HEK293T (cell line): ENCODE measurements at regions of chr3 and their contacts with region 1.

Region 1: GRCh38 chr3:111717601-111718000 is 122.5 kb upstream of the ZBED2 start:
- DNase-seq: peak; percentile 76

Region 2: GRCh38 chr3:111610189-111610588 is 107.4 kb before region 1 on chr3:
- CTCF ChIA-PET with region 1: no interaction called
- POLR2A ChIA-PET with region 1: no interaction called
- DNase-seq: no peak

Region 3: GRCh38 chr3:111668912-111669488 is 48.6 kb before region 1 on chr3:
- CTCF ChIA-PET with region 1: interaction called, 30 read pairs
- POLR2A ChIA-PET with region 1: interaction called, 4 read pairs
- DNase-seq: peak; percentile 51

Region 4: DNA sequence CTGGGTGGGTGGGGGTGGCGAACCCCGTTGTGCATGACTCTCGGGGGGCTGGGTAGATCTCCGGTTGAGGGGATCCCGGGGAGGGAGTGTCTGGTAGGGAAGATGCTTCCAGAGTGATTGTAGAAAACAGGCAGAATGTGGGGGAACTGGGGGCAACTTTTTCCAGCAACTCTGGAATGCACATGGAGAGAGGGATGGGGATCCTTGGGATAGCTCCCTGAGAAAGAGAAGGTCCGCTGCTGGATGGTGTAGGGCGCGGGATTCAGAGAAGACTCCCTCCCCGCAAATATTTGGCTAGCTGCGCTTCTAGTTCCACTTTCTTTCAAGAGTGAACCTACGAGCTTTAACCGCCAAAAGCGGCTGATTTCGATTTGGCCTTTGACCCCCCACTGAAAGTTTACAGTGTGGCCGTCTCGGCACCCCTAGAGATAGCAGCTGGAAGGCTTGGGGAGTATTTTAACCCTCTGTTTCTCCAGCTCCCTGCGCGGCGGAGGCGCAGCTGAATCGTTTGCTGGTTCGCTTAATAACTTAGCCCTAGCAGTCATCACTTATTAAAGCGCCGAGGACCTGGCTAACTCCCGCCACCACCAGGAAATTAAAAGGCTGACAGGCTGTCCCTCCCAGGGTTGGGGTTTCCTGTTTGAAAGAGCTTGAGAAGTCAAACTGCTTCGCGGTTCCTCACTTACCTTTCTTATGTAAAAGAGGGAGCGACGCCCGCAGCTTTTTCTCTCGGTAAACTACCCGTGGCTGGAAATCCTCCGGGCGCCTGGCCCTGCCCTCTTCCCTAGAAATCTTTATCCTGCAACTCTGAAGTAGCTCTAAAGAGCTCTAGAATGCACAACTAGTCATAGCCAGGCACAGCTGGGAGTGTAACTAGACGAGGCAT is 142.6 kb after region 1 on chr3:
- CTCF ChIA-PET with region 1: interaction called, 11 read pairs
- POLR2A ChIA-PET with region 1: interaction called, 6 read pairs
- DNase-seq: peak; percentile 69

Region 5: DNA sequence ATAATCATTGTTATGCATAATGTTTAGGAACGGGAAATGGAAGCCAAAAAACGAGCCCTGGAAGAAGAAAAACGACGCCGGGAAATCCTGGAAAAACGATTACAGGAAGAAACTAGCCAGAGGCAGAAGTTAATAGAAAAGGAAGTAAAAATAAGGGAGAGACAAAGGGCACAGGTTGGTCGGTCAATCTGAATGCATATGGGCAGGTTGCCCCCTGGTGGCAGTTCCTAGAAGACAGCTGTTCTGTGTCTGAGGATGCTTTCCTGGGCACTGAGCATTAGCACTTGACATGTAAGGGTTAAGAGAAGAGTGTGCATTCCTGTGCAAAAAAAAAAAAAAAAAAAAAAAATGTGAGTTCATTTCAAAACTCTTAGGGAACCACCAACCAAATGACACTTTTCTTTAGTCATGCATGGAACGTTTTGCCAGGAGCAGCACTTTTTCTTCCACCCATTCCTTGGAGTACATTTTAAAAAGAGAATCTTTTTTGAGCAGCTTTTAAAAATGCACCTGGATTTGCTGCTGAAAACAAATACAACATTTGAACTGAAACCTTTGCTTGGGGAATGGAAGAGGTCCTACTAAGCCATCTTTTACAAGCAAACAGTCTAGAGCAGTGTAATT is 250.2 kb after region 1 on chr3:
- CTCF ChIA-PET with region 1: interaction called, 44 read pairs
- POLR2A ChIA-PET with region 1: no interaction called
- DNase-seq: peak; percentile 61

Region 6: GRCh38 chr3:112043603-112044201 is 326.1 kb after region 1 on chr3:
- CTCF ChIA-PET with region 1: interaction called, 14 read pairs
- POLR2A ChIA-PET with region 1: no interaction called
- DNase-seq: peak; percentile 80